ENCODE measurements at regions of chr15 and their contacts with region 1.

Region 1: DNA sequence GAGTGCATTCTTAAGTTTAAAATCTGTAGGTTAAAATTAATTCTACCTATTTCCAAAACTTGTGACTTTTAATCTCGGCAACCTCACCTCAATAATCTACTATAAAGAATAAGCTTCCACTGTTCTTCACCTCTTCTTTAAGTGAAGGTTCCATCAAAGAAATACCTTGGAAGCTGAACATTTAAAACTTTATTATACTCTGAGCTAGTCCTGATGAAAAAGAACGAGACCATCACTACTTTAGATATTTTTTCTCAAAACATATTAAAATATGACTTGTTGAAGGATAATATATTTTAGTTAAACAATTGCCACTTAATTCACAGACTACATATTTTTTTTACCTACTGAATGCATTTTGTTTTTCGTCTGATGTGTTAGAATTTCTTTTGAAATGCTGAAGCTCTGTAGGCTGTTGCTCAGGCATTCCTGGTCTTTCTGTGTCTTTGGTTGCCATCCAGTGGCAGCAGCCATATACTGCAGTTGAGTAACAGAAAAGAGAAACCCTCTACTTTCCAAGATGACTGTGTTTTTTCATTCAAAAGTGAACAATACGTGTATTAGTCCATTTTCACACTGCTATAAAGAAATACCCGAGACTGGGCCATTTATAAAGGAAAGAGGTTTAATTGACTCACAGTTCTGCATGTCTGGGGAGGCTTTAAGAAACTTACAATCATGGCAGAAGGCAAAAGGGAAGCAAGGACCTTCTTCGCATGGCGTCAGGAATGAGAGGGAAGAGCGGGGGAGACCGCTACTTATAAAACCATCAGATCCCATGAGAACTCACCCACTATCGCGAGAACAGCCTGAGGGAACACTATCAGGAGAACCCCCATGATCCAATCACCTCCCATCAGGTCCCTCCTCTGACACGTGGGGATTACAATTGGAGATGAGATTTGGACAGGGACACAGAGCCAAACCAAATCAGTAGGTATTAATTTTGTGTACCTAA is 4.5 kb upstream of the GOLGA8B start:
- DNase-seq: peak in 1 of 2 donors; percentile 47
- ATAC-seq: peak in 7 of 8 donors; percentile 56 to 79 (median 68)
- H3K4me3 ChIP-seq: peak overlapping the region in 7 of 10 donors; percentile 4 to 39 (median 27)
- H3K27ac ChIP-seq: no peak overlapping the region
- H3K4me1 ChIP-seq: peaks cover 0 to 16% (median 8%) of the 10 kb centered on the region in 9 donors
- H3K27me3 ChIP-seq: peaks cover 0 to 19% (median 9%) of the 10 kb centered on the region in 7 donors
- CTCF ChIP-seq: peak; percentile 41 to 86 (median 73)

Region 2: DNA sequence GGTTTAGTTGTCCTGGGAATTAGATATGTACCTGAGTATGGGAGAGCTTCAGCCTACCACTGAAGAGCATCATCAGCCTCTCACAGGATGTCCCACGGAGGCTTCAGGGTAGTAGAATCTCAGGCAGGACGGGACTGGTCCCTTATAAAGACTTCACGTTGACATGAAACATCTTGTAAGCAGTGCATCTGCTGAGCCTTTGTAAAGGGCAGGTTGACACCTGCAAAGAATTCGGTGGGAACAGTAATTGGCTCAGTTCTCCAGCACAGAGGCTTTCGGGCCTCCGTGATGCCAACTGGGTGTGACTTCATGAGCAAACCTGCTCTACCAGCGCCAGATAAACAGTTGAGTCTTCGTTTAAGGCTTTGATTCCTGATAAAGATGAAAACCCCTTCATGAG is 522.1 kb before region 1 on chr15:
- intact Hi-C with region 1: loop called in 2 of 10 experiments (anchors 5 to 10 kb)
- DNase-seq: no peak
- ATAC-seq: no peak
- H3K4me3 ChIP-seq: no peak overlapping the region
- H3K27ac ChIP-seq: no peak overlapping the region
- H3K4me1 ChIP-seq: peaks cover 0 to 6% (median 0%) of the 10 kb centered on the region in 9 donors
- H3K27me3 ChIP-seq: no peaks in the 10 kb centered on the region
- CTCF ChIP-seq: no peak

Region 3: DNA sequence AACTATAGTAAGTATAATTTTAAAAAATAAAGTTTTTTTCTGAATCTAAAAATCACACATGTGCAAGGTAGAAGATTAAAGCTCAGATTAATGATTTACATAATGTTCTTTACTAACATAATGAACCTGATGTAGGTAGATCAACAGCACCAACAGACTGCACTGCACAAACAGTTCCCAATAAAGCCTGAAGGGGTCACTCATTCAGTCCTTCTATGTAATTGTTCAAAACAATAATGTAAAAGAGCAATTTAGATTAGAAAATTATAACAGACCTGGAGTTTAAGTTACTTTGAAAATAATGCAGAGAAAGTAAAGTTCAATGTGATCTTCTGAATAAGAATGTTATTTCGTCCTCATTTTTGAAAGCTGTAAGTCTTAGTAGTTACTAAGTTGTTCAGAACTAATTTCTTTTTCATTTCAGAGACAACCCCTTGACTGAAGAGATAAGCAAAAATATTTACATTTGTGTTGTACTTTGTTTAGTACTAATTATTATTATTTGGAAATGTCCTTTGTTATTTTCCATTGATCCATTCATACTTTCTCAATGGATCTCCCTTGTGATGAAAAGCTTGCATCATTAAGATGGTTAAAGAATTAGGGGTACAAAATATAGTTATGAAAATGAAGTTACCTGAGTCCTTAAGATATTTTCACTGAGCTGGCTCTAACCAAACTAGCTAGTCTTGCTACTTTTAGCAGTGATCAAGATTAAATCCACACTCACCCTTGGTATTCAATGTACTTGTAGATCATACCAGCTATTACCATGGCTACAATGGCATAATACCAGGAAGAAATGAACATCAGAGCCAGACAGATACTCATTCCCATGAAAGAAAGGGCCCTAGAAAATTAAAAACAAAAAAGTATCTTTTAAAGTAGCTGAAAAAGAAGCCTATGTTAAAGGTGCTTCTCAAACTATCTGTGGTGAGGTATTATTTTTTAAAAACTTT is 346.3 kb before region 1 on chr15:
- intact Hi-C with region 1: loop called in 2 of 10 experiments (anchors 10 kb)
- DNase-seq: no peak
- ATAC-seq: peak in 3 of 8 donors; percentile 56 to 64 (median 61)
- H3K4me3 ChIP-seq: no peak overlapping the region
- H3K27ac ChIP-seq: no peak overlapping the region
- H3K4me1 ChIP-seq: peaks cover 0 to 6% (median 0%) of the 10 kb centered on the region in 9 donors
- H3K27me3 ChIP-seq: no peaks in the 10 kb centered on the region
- CTCF ChIP-seq: peak; percentile 52 to 85 (median 79)

Region 4: GRCh38 chr15:34342737-34343575 is 245.0 kb before region 1 on chr15 and contains the starts of genes NOP10 and NUTM1:
- intact Hi-C with region 1: loop called in 1 of 10 experiments (anchors 10 kb)
- DNase-seq: peak; percentile 92 to 93
- ATAC-seq: peak; percentile 91 to 97 (median 96)
- H3K4me3 ChIP-seq: peak within 1 kb of the TSS; percentile 56 to 92 (median 76)
- H3K27ac ChIP-seq: peak within 1 kb of the TSS; percentile 14 to 94 (median 92)
- H3K4me1 ChIP-seq: peaks cover 0 to 45% (median 19%) of the 10 kb centered on the region in 9 donors
- H3K27me3 ChIP-seq: no peaks in the 10 kb centered on the region
- CTCF ChIP-seq: peak; percentile 92 to 97 (median 96)
- total RNA-seq, gene NOP10: 92.3 to 159 (median 119) TPM
- total RNA-seq, gene NUTM1: not detected

Region 5: DNA sequence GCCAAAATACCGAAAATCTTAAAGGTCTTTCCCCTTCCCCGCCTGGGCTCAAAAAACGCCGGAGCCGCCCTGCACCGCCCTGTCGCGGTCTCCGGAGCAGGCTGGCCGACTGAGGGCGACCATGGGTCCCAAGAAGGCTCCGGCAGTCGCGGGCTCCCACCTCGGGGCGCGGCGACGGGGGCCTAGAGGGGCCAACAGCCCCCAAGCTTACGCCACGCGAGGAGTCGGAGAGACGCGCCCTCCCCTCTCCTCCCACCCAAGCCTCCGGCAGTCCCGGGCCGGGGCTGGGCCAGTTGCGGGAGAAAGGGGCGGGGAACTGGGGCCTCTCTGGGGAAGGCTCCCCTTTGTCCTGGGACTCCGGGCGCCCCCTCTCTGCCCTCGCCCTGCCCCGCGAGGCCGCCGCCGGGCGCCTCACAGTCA is 73.7 kb before region 1 on chr15:
- intact Hi-C with region 1: loop called in 4 of 10 experiments (anchors 10 kb)
- DNase-seq: peak; percentile 54 to 63
- ATAC-seq: peak; percentile 85 to 92 (median 91)
- H3K4me3 ChIP-seq: peak overlapping the region; percentile 49 to 88 (median 66)
- H3K27ac ChIP-seq: peak overlapping the region; percentile 72 to 96 (median 80)
- H3K4me1 ChIP-seq: peaks cover 0 to 18% (median 14%) of the 10 kb centered on the region in 9 donors
- H3K27me3 ChIP-seq: peaks cover 0 to 48% (median 6%) of the 10 kb centered on the region in 7 donors
- CTCF ChIP-seq: peak in 2 of 9 donors; percentile 7 to 21

Region 6: GRCh38 chr15:34520566-34520965 is 67.4 kb before region 1 on chr15:
- intact Hi-C with region 1: loop called in 5 of 10 experiments (anchors 10 kb)
- DNase-seq: no peak
- ATAC-seq: no peak
- H3K4me3 ChIP-seq: no peak overlapping the region
- H3K27ac ChIP-seq: no peak overlapping the region
- H3K4me1 ChIP-seq: peaks cover 0 to 11% (median 0%) of the 10 kb centered on the region in 9 donors
- H3K27me3 ChIP-seq: peaks cover 0 to 10% (median 0%) of the 10 kb centered on the region in 7 donors
- CTCF ChIP-seq: no peak

Region 7: GRCh38 chr15:34650177-34650576 is 62.2 kb after region 1 on chr15:
- intact Hi-C with region 1: no loop called
- DNase-seq: no peak
- ATAC-seq: no peak
- H3K4me3 ChIP-seq: no peak overlapping the region
- H3K27ac ChIP-seq: no peak overlapping the region
- H3K4me1 ChIP-seq: no peaks in the 10 kb centered on the region
- H3K27me3 ChIP-seq: no peaks in the 10 kb centered on the region
- CTCF ChIP-seq: no peak

Measured in heart right ventricle (tissue), 16 donors.